Activated CD4-positive, alpha-beta memory T cell treated with anti-CD3 and anti-CD28 coated beads for 36 hours (primary cell): ENCODE measurements at regions of chr17 and their contacts with region 1.

Region 1: DNA sequence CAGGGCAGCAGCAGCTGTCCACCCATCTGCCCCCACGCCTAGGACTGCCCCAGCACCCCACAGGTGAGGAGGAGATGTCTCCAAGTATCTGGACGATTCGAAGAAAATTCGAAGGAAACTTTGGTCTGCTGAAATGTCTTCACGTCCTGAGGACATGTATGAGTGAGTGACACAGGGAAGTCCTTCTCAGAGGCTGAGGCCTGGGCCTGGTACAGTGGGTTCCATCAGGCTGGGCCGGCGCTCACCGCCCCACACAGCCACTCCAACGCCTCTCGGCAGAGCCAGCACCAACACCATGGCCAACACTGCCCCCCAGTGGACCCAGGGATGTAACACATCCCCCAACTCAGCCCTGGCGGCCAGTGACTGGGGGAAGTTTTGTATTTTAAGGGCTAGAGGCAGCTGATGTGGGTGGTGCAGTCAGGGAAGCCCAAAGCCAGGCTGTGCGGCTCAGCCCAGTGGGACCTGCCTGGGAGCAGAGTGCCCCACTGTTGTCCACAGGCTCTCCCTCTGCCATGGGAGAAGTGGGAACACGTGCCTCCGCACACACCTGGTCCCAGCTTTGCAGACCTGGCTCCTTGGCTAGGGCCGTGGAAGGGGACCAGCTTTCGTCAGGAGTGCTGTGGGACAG is 55.8 kb upstream of the FASN start:
- DNase-seq: peak; percentile 87
- H3K4me3 Mint-ChIP-seq: no peak overlapping the region
- H3K27ac Mint-ChIP-seq: no peak overlapping the region
- H3K4me1 Mint-ChIP-seq: peaks cover 4% of the 10 kb centered on the region
- H3K27me3 Mint-ChIP-seq: no peaks in the 10 kb centered on the region

Region 2: GRCh38 chr17:82065638-82066303 is 88.1 kb before region 1 on chr17 and contains the start of gene DUS1L:
- CTCF ChIA-PET with region 1: interaction called, 3 read pairs
- POLR2A ChIA-PET with region 1: no interaction called
- intact Hi-C with region 1: loop called (anchors 10 kb)
- DNase-seq: peak; percentile 78
- H3K4me3 Mint-ChIP-seq: peak within 1 kb of the TSS; percentile 85
- H3K27ac Mint-ChIP-seq: peak within 1 kb of the TSS; percentile 82
- H3K4me1 Mint-ChIP-seq: peaks cover 9% of the 10 kb centered on the region
- H3K27me3 Mint-ChIP-seq: no peaks in the 10 kb centered on the region
- total RNA-seq, gene DUS1L: 118 to 131 TPM

Region 3: DNA sequence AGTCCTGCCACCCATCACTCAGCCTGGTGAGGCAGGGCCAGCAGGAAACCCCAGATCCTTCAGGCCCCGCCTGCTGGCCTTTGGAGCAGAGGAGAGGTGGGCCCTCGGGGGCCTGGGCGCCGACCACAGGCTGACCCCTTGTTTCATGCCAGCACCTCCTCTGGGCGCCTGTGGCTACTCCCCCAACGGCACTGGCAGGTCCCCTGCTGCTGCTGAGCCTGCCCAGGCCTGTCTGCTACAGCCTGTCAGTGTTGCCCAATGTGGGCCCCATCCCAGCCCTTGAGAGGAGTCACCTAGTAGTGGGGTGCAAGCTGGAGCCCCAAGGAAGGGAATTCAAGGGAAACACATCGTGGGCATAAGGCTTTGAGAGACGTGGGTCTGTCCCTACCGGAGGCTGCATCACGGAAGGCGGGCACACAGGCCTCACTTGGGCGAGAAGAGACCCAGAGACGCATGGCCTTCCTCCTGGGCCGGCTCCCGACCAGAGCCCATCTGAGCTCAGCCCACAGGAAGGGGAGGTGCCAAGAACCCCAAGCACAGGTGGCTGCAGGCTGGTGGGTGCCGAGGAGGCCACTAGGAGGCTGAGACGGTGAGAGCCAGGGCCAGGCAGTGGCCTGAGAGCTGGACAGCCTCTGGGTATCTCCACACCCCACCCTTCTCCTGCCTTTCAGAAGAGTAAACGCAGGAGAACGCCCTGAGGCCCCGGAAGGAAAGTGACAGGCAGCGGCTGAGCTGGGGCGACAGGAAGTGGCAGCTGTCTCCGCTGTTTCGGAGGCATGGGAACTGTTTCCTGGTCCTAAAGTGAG is 47.8 kb before region 1 on chr17:
- CTCF ChIA-PET with region 1: interaction called, 11 read pairs
- POLR2A ChIA-PET with region 1: no interaction called
- intact Hi-C with region 1: no loop called
- DNase-seq: peak; percentile 78
- H3K4me3 Mint-ChIP-seq: peak overlapping the region; percentile 89
- H3K27ac Mint-ChIP-seq: peak overlapping the region; percentile 96
- H3K4me1 Mint-ChIP-seq: peaks cover 29% of the 10 kb centered on the region
- H3K27me3 Mint-ChIP-seq: no peaks in the 10 kb centered on the region